IMR-90 (cell line): ENCODE measurements at regions of chr2 and their contacts with region 1.

Region 1: GRCh38 chr2:242015108-242016065 is 145.9 kb downstream of the RTP5 start:
- DNase-seq: no peak
- ATAC-seq: no peak
- H3K4me3 ChIP-seq: no peak overlapping the region
- H3K27ac ChIP-seq: no peak overlapping the region
- H3K4me1 ChIP-seq: no peaks in the 10 kb centered on the region
- H3K27me3 ChIP-seq: peaks cover 43% of the 10 kb centered on the region
- CTCF ChIP-seq: no peak
- POLR2A ChIP-seq: no peak
- RAD21 ChIP-seq: no peak

Region 2: DNA sequence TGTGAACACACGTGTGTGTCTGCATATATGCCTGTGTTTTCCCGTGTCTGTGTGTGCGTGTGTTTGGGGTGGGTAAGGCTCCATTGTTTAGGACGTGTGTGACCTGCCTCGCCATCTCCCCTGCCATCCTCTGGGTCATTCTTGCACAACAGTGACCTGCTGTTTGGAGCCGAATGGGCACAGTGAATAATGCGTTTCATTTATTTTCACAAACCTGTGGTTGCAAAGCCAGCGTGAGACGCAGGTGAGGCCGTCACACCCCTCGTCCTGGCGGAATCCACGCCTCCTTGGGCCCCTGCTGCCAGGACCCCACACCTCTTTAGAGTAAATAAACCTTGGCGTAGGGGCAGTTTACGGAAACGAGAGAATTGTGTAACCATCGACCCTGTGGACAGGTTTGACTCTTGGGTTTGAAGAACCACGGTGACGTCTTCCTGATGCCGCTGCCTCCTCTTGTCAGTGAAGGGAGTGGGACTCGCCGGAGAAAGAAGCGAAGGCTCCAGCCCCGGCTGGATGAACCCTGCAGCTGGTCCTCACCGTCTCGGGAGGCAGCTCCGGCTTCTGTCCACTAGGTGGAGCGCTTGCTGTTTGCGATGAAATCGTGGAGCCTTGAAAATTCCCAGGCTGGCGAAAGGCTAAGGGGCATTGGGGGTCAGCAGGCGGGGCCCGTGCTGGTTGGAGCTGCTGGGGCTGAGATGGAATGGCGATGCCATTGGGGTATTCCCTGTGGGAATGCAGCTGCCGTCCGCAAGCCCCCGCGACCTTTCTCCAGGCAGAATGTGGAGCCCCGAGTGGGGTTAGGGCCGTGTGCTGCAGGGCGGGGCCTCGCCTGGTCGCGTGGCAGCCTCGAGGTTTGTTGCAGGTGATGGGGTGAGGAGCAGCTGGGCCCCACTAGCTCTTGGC is 64.7 kb before region 1 on chr2:
- CTCF ChIA-PET with region 1: no interaction called
- POLR2A ChIA-PET with region 1: no interaction called
- dilution Hi-C with region 1: no loop called
- in situ Hi-C with region 1: no loop called
- intact Hi-C with region 1: loop called (anchors 1 kb)
- DNase-seq: peak; percentile 49
- ATAC-seq: peak; percentile 95
- H3K4me3 ChIP-seq: no peak overlapping the region
- H3K27ac ChIP-seq: no peak overlapping the region
- H3K4me1 ChIP-seq: no peaks in the 10 kb centered on the region
- H3K27me3 ChIP-seq: peaks cover 20% of the 10 kb centered on the region
- CTCF ChIP-seq: peak; percentile 94
- POLR2A ChIP-seq: 0 out of 2 replicates have a peak, but pooled peaks have one; percentile 35
- RAD21 ChIP-seq: peak; percentile 91